ENCODE measurements at regions of chr6 and their contacts with region 1.

Region 1: DNA sequence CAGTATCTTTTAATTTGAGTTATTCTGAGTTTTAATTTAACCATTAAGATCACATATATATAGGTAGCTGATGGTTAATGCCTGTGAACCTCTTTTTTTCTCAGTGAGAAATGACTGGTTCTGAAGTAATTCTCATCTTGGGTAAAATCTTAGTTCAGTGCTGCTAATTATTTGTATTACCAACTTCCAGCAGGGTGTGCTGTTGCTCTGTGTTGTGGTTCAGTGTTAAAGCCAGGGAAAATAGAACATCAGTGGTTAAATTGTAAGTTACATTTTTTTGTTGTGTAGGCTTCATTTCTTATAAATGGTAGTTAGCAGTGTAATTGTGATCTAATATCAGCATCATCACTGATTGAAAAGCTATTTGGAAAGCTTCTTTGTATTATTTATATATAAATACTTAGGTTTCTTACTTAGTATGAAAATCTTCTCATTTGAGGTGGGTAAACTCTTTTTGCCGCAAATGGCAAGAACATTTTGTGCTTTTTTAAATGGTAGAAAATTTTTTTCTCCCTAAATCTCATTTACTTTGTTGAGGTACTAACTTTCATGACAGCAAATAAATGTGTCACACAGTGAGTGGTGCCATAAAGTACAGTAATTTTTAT is 43.7 kb downstream of the CDC5L start:
- DNase-seq: peak in 3 of 5 donors; percentile 27 to 35 (median 28)
- ATAC-seq: peak in 3 of 4 donors; percentile 45 to 65 (median 63)
- H3K4me3 ChIP-seq: no peak overlapping the region
- H3K27ac ChIP-seq: no peak overlapping the region
- H3K4me1 ChIP-seq: peaks cover 0 to 36% (median 11%) of the 10 kb centered on the region in 12 donors
- H3K27me3 ChIP-seq: no peaks in the 10 kb centered on the region
- CTCF ChIP-seq: peak; percentile 50 to 82 (median 72)
- POLR2A ChIP-seq: no peak

Region 2: GRCh38 chr6:44456070-44456965 is 25.1 kb after region 1 on chr6:
- intact Hi-C with region 1: loop called in 5 of 10 experiments (anchors 1 to 2 kb)
- DNase-seq: peak in 1 of 5 donors; percentile 38
- ATAC-seq: peak in 3 of 4 donors; percentile 77 to 81 (median 81)
- H3K4me3 ChIP-seq: peak overlapping the region in 4 of 12 donors; percentile 14 to 20 (median 18)
- H3K27ac ChIP-seq: no peak overlapping the region
- H3K4me1 ChIP-seq: peaks cover 0 to 25% (median 10%) of the 10 kb centered on the region in 12 donors
- H3K27me3 ChIP-seq: no peaks in the 10 kb centered on the region
- CTCF ChIP-seq: peak; percentile 70 to 92 (median 83)
- POLR2A ChIP-seq: no peak

Region 3: DNA sequence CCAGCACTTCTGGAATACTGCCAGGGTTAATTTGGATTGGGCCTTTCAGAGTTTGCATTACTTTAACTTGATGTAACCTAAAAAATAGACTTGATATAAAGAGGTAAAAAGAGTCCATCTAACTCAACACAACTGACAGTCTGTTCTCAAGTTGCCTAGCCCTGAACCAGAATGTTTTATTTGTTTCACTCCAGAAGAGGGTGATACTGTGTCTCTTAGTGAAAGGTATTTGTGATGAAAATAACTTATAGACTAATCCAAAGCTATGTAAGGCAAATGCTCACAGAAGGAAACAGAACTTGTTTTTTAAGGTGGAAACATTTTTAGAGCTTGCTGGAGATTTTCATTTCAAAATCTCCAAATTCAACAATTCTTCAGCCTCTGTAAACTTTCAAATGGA is 427.8 kb after region 1 on chr6:
- intact Hi-C with region 1: no loop called
- DNase-seq: no peak
- ATAC-seq: no peak
- H3K4me3 ChIP-seq: no peak overlapping the region
- H3K27ac ChIP-seq: no peak overlapping the region
- H3K4me1 ChIP-seq: peaks cover 0 to 30% (median 6%) of the 10 kb centered on the region in 12 donors
- H3K27me3 ChIP-seq: no peaks in the 10 kb centered on the region
- CTCF ChIP-seq: peak in 3 of 12 donors; percentile 14 to 26 (median 17)
- POLR2A ChIP-seq: no peak